Esophagus muscularis mucosa (tissue), 4 donors: ENCODE measurements at regions of chr11 and their contacts with region 1.

Region 1: DNA sequence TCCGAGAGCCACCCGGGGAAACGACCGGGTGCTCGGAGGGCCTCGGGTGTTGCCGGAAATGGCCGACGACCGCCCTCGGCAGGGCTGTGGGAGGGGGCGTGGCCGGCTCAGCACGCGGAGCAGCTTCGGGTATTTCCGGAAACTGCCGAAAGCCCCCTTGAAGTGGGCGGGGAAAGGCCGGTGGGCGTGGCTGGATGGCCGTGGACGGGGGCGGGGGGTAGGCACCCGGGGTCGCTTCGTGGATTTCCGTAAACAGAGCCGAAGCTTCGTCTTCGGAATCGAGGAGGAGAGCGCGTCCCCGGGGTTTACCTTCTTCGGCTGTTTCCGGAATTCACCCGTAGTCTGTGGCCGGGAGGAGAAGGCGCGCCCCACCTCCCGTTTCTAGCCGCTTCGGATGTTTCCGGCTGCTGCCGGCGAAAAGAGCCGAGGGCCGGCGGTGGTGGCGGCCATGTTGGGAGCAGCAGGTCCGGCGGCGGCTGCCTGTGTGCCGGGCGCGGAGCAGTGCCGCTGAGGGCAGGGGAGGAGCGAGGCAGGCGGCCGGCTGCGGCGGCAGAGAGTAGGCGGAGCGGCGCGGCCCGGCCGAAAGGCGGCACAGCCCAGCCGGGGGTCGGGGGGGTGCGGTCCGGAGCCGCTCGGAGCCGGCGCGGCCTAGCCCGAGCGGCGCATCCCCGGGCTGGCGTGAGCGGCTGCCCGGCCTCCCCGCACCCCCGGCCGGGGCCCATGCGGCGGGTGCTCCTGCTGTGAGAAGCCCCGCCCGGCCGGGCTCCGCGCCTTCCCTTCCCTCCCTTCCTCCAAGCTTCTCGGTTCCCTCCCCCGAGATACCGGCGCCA is at the start of gene MARK2:
- DNase-seq: peak; percentile 100
- H3K4me3 ChIP-seq: peak within 1 kb of the TSS; percentile 89 to 96 (median 92)
- H3K27ac ChIP-seq: peak within 1 kb of the TSS; percentile 89 to 90 (median 90)
- H3K4me1 ChIP-seq: peaks cover 44 to 63% (median 58%) of the 10 kb centered on the region in 4 donors
- H3K27me3 ChIP-seq: no peaks in the 10 kb centered on the region
- CTCF ChIP-seq: peak in 1 of 3 experiments; percentile 5
- EP300 ChIP-seq: no peak
- POLR2A ChIP-seq: no peak
- total RNA-seq, gene MARK2: 21.5 to 38.1 (median 30.6) TPM

Region 2: GRCh38 chr11:63871962-63872799 is 33.3 kb after region 1 on chr11:
- intact Hi-C with region 1: loop called (anchors 2 kb)
- DNase-seq: peak; percentile 94
- H3K4me3 ChIP-seq: peak overlapping the region in 2 of 4 donors; percentile 10 to 17
- H3K27ac ChIP-seq: peak overlapping the region; percentile 47 to 72 (median 60)
- H3K4me1 ChIP-seq: peaks cover 83 to 97% (median 88%) of the 10 kb centered on the region in 4 donors
- H3K27me3 ChIP-seq: no peaks in the 10 kb centered on the region
- CTCF ChIP-seq: peak; percentile 44 to 61 (median 47)
- EP300 ChIP-seq: no peak
- POLR2A ChIP-seq: no peak

Region 3: GRCh38 chr11:63945477-63946163 is 106.7 kb after region 1 on chr11:
- intact Hi-C with region 1: loop called (anchors 1 kb)
- DNase-seq: no peak
- H3K4me3 ChIP-seq: peak overlapping the region; percentile 19 to 42 (median 28)
- H3K27ac ChIP-seq: peak overlapping the region; percentile 68 to 77 (median 75)
- H3K4me1 ChIP-seq: peaks cover 11 to 19% (median 16%) of the 10 kb centered on the region in 4 donors
- H3K27me3 ChIP-seq: no peaks in the 10 kb centered on the region
- CTCF ChIP-seq: peak; percentile 82 to 94 (median 87)
- EP300 ChIP-seq: no peak
- POLR2A ChIP-seq: no peak

Region 4: DNA sequence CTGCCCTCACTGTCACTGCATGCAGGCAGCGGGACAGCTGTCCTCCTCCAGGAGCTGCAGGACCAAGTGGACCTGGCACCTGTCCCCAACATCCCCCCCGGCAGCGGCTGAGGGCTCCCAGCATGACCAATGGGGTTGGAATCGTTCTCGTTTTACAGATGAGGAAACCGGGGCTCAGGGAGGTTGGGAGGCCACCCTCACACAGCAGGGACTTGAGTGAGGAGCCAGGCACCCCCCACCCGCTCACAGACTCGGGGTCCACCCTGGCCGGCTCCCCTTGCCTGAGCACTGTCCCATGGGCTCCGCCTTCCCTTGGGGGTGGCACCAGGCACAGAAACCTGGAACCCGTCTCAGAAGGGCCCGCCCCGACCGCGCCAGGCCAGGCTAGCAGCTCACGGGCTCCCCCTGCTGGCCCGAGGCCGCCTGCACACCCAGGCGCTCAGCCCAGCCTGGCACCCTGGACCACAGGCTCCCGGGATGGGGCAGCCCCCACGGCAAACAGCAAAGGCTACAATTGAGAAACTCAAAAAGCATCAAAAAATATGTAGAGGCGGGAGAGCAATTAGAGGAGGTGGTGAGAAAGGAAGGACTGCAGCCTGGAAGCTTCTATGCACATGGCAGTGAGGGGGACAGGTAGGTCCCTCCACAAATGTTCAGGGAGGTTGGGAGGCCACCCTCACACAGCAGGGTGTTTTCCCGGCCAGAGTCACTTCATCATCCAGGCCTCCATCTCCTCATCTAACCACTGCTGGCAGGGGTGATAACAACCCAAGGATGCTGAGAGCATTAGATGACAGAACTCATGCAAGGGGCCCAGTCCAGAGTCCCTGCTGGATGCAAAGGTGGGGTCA is 314.2 kb after region 1 on chr11:
- intact Hi-C with region 1: loop called (anchors 5 kb)
- DNase-seq: no peak
- H3K4me3 ChIP-seq: peak overlapping the region in 2 of 4 donors; percentile 7 to 25
- H3K27ac ChIP-seq: no peak overlapping the region
- H3K4me1 ChIP-seq: peaks cover 19 to 26% (median 22%) of the 10 kb centered on the region in 4 donors
- H3K27me3 ChIP-seq: no peaks in the 10 kb centered on the region
- CTCF ChIP-seq: peak in 2 of 3 experiments; percentile 94 to 99
- EP300 ChIP-seq: no peak
- POLR2A ChIP-seq: no peak